ENCODE measurements at regions of chr2 and their contacts with region 1.

Region 1: DNA sequence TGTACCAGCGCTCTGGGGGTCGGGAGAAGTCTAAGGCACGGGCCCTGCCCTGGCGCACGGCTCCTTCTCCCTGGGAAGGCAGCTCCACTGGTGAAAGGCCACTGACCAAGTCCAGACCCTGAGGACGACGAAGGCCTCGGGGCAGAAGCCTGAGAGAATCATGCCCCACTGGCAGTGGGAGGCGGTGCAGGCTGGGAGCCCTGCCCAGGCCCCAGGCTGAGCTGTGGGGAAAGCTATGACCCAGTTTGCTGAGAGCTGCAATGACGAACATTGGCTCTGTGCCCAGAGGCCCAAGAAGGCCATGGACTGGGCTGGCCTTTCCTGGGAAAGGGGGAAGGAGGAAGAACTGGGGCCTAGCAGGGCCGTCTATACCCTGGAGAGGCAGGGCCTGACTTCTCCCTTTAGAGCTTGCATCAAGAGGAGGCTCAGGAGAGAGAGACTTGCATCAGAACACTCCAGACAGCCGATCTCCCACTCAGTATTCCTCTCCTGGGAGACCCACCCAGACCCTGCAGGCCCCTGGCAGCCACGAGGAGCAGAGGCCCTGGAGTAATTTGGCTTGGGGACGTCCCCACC is 32.9 kb downstream of the HS1BP3 start:
- DNase-seq: peak; percentile 100
- ATAC-seq: peak; percentile 96
- H3K4me3 ChIP-seq: no peak overlapping the region
- H3K27ac ChIP-seq: peak overlapping the region; percentile 91
- H3K4me1 ChIP-seq: peaks cover 25% of the 10 kb centered on the region
- H3K27me3 ChIP-seq: no peaks in the 10 kb centered on the region
- CTCF ChIP-seq: peak; percentile 60
- POLR2A ChIP-seq: peak; percentile 74
- RAD21 ChIP-seq: peak; percentile 61

Region 2: DNA sequence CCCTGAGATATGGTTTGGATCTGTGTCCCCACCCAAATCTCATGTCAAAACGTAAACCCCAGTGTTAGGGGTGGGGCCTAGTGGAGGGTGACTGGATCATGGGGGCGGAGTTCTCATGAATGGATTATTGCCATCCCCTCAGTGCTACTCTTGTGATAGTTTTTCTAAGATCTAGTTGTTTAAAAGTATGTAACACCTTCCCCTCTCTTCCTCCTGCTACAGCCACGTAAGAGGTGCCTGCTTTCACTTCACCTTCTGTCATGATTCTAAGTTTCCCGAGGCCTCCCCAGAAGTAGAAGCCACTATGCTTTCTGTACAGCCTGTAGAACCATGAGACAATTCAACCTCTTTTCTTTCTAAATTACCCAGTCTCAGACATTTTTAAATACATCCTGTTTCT is 284.2 kb before region 1 on chr2:
- CTCF ChIA-PET with region 1: no interaction called
- POLR2A ChIA-PET with region 1: no interaction called
- dilution Hi-C with region 1: no loop called
- in situ Hi-C with region 1: no loop called
- intact Hi-C with region 1: no loop called
- DNase-seq: no peak
- ATAC-seq: no peak
- H3K4me3 ChIP-seq: no peak overlapping the region
- H3K27ac ChIP-seq: no peak overlapping the region
- H3K4me1 ChIP-seq: peaks cover 2% of the 10 kb centered on the region; the same call in 1 of the 2 replicates
- H3K27me3 ChIP-seq: no peaks in the 10 kb centered on the region
- CTCF ChIP-seq: no peak
- POLR2A ChIP-seq: no peak
- RAD21 ChIP-seq: no peak

Region 3: DNA sequence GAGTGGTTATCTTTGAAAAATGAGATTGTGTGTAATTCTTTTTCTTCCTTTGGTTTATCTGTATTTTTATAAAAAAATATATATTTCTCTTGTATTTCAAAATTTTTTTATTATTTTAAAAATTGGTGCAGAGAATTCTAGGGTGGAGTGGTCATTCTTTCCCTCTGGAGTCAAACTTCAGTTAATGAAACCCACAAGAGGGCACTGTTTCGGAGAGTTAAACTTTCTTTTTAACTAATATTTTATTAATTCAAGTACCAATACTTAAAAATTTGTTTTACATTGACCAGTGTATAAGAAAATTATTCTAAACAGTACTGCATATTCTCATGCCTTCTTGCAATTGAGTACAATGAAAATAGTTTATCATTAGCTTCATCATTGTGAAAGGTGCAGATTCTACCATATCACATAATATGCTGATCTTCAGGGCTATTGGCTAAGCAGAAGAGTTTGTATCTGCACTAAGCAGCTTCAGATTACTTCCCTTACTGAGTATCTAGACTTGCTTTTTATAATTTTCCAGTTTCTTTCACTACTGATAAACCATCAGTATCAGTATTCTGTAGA is 17.1 kb before region 1 on chr2:
- CTCF ChIA-PET with region 1: interaction called, 16 read pairs
- POLR2A ChIA-PET with region 1: no interaction called
- dilution Hi-C with region 1: no loop called
- in situ Hi-C with region 1: no loop called
- intact Hi-C with region 1: no loop called
- DNase-seq: no peak
- ATAC-seq: no peak; the same call in 1 of the 2 replicates
- H3K4me3 ChIP-seq: no peak overlapping the region
- H3K27ac ChIP-seq: no peak overlapping the region
- H3K4me1 ChIP-seq: peaks cover 11% of the 10 kb centered on the region
- H3K27me3 ChIP-seq: no peaks in the 10 kb centered on the region
- CTCF ChIP-seq: peak; percentile 54
- POLR2A ChIP-seq: no peak
- RAD21 ChIP-seq: peak; percentile 49

Measured in IMR-90 (cell line).